Natural killer cell (primary cell): ENCODE measurements at regions of chr10 and their contacts with region 1.

Region 1: GRCh38 chr10:70575874-70576802 is 26.4 kb downstream of the PRF1 start:
- DNase-seq: peak; percentile 48 to 70
- ATAC-seq: peak; percentile 58 to 76 (median 73)
- H3K4me3 ChIP-seq: peak overlapping the region; percentile 18
- H3K4me3 Mint-ChIP-seq: peak overlapping the region; percentile 91
- H3K27ac ChIP-seq: peak overlapping the region; percentile 66
- H3K27ac Mint-ChIP-seq: peak overlapping the region; percentile 89 to 92
- H3K4me1 ChIP-seq: peaks cover 82% of the 10 kb centered on the region
- H3K4me1 Mint-ChIP-seq: peaks cover 83 to 84% of the 10 kb centered on the region in 2 donors
- H3K27me3 ChIP-seq: no peaks in the 10 kb centered on the region
- H3K27me3 Mint-ChIP-seq: no peaks in the 10 kb centered on the region
- CTCF ChIP-seq: no peak

Region 2: DNA sequence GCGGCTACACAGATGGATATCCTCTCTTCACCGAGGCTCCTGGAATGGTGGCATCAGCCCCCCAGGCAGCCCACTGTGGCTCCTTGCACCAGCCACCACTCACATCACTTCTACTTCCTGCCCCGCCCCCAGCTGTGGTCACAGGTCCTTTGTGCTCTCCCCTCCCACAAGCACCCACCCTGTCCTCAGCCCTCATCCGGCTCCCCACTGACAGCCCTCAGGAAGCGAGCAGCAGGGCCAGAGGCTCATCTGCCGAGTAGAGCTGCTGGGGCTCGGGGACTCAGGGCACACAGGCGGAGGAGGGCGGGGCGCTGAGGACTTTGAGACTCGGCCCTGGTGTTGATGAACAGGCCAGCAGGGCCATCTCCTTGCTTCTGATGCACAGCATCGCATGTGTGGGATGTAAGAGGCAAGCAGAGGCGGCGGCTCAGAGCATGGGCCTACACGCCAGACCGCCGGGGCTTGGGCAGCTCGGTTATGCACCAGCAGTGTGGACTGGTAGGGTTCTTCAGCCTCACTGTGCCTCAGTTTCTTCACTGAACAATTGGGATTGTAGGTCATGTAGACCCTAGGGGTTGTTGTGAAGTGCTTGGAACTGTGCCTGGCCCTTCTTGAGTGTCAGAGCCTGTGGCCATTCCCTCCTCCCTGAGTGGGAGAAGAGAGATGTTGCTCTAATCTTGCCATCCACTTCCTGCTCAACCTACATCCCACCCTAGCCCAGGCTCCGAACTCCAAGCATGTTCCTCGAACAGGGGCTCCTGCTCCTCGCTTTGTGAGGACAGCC is 26.7 kb after region 1 on chr10 and contains the start of gene PRF1:
- intact Hi-C with region 1: loop called (anchors 2 kb)
- DNase-seq: peak; percentile 88
- ATAC-seq: peak; percentile 54 to 79 (median 69)
- H3K4me3 ChIP-seq: peak within 1 kb of the TSS; percentile 88
- H3K4me3 Mint-ChIP-seq: peak within 1 kb of the TSS; percentile 100
- H3K27ac ChIP-seq: peak within 1 kb of the TSS; percentile 93
- H3K27ac Mint-ChIP-seq: peak within 1 kb of the TSS; percentile 95 to 97
- H3K4me1 ChIP-seq: peaks cover 67% of the 10 kb centered on the region
- H3K4me1 Mint-ChIP-seq: peaks cover 67 to 86% of the 10 kb centered on the region in 2 donors
- H3K27me3 ChIP-seq: no peaks in the 10 kb centered on the region
- H3K27me3 Mint-ChIP-seq: no peaks in the 10 kb centered on the region
- CTCF ChIP-seq: no peak
- total RNA-seq, gene PRF1: 1,641 to 2,133 (median 1,982) TPM